Activated CD8-positive, alpha-beta memory T cell treated with anti-CD3 and anti-CD28 coated beads, Interleukin-2, amount 10 ng/mL, durations not matched to agents 7 days and 5 days (primary cell): ENCODE measurements at regions of chr5 and their contacts with region 1.

Region 1: GRCh38 chr5:43019614-43020293 is 20.4 kb downstream of the ANXA2R start:
- DNase-seq: peak; percentile 94
- ATAC-seq: peak; percentile 76
- H3K4me3 Mint-ChIP-seq: peak overlapping the region; percentile 96
- H3K27ac Mint-ChIP-seq: peak overlapping the region; percentile 100
- H3K4me1 Mint-ChIP-seq: peaks cover 33% of the 10 kb centered on the region
- H3K27me3 Mint-ChIP-seq: no peaks in the 10 kb centered on the region

Region 2: GRCh38 chr5:42908509-42909488 is 111.0 kb before region 1 on chr5:
- CTCF ChIA-PET with region 1: interaction called, 12 read pairs
- DNase-seq: peak; percentile 94
- ATAC-seq: peak; percentile 95
- H3K4me3 Mint-ChIP-seq: peak overlapping the region; percentile 90
- H3K27ac Mint-ChIP-seq: peak overlapping the region; percentile 79
- H3K4me1 Mint-ChIP-seq: peaks cover 17% of the 10 kb centered on the region
- H3K27me3 Mint-ChIP-seq: peaks cover 30% of the 10 kb centered on the region

Region 3: GRCh38 chr5:42994246-42995151 is 25.3 kb before region 1 on chr5:
- CTCF ChIA-PET with region 1: interaction called, 122 read pairs
- DNase-seq: peak; percentile 94
- ATAC-seq: peak; percentile 61
- H3K4me3 Mint-ChIP-seq: peak overlapping the region; percentile 94
- H3K27ac Mint-ChIP-seq: peak overlapping the region; percentile 100
- H3K4me1 Mint-ChIP-seq: peaks cover 16% of the 10 kb centered on the region
- H3K27me3 Mint-ChIP-seq: no peaks in the 10 kb centered on the region

Region 4: DNA sequence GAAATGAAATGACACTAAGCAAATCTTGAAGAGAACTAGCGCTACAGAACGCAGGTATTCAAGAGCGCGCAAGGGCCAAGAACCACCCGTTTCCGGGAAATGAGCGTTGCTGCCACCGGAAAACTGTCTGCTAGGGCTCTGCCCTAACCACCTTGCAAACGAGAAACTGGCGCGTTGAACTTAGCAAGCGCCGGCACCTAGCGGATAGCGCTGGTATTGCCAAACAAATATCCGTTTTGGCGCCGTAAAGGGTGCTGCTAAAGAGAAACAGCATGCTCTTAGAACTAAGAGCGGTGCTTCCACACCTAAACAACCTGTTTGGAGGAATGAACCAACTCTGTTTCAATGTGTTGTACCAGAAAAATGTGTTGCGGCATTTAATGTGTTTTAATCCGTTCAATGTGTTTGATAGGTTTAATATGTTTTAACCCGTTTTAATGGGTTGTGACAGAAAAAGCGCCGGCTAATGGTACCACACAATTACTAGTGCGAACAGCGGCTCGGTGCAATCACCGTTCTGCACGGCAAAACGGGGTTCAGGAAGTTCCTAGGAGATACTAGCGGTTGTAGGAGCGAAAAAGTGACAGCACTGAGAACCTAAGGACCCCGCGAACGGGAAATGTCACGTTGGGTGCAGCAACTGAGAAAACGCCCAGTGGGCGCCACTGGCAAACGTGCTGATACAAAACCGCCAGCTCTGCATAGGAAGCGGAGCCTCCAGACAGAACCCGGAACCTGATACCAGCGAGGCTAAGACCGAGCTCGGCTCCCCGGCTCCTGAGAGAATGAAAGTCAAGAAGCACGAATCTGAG is 20.7 kb after region 1 on chr5 and contains the start of gene ANXA2R:
- CTCF ChIA-PET with region 1: interaction called, 165 read pairs
- DNase-seq: peak; percentile 98
- ATAC-seq: peak; percentile 55
- H3K4me3 Mint-ChIP-seq: peak within 1 kb of the TSS; percentile 94
- H3K27ac Mint-ChIP-seq: peak within 1 kb of the TSS; percentile 100
- H3K4me1 Mint-ChIP-seq: peaks cover 43% of the 10 kb centered on the region
- H3K27me3 Mint-ChIP-seq: no peaks in the 10 kb centered on the region
- total RNA-seq, gene ANXA2R: 14.5 to 32.0 TPM

Region 5: DNA sequence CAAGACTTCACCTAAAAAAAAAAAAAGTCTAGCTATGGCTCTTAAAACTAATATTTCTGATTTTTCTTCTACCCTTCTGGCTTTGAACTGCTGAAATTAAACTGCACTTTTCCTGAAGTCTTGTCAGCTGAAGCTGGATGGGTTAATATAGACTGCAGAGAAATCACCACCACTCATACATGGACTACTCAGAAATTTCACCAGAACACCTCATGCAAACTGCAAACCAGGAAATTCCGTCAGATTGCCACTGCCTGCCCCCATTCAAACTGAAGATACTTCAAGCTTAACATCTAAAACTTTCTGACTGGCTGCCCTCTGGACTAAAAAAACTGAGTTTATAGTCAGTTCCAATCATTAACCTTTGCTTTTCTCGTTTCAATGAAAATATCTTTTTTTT is 31.9 kb after region 1 on chr5:
- CTCF ChIA-PET with region 1: no interaction called
- DNase-seq: no peak
- ATAC-seq: no peak
- H3K4me3 Mint-ChIP-seq: no peak overlapping the region
- H3K27ac Mint-ChIP-seq: no peak overlapping the region
- H3K4me1 Mint-ChIP-seq: peaks cover 14% of the 10 kb centered on the region
- H3K27me3 Mint-ChIP-seq: no peaks in the 10 kb centered on the region

Region 6: DNA sequence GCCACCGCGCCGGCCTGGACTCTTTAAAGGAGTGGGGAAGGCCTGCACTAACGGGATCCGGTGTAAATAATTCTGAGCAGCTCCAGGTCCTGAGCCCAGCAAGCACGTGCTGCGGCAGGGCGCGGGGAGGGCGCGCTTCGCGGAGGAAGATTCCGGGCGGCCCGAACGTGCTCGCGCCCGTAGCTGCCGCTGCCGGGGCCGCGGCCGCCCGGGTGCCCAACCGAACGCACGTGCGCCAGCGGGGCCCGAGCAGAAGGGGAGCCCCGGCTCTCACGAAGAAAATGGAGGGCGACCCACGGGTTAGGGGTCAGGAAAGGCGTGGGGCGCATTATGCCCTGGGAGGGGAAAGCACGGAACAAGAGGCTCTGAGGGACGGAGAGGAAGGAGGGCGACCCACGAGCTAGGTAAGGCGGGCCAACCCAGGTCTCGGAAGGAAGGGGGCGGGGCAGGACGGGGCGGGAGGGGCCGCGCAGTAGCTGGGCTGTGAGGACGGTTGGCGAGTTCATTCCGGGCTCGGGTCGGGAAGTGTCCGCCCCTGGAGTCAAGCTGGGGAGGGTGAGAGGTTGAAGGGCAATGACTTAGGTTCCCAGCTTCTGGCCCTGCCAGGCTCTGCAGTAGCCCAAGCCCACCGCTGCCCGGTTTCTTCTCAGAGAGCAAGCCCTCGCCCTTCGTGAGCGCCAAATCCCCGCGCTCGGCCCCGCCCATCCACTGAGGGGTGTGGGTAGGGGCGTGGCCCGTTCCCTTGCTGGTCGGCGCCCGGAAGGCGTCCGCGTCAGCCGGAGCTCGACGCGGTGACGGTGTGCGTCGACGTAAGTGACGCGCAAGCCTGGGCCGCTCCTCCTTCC is 101.2 kb after region 1 on chr5 and contains the start of gene ZNF131:
- CTCF ChIA-PET with region 1: interaction called, 10 read pairs
- DNase-seq: peak; percentile 97
- ATAC-seq: peak; percentile 88
- H3K4me3 Mint-ChIP-seq: peak within 1 kb of the TSS; percentile 87
- H3K27ac Mint-ChIP-seq: peak within 1 kb of the TSS; percentile 93
- H3K4me1 Mint-ChIP-seq: peaks cover 38% of the 10 kb centered on the region
- H3K27me3 Mint-ChIP-seq: no peaks in the 10 kb centered on the region
- total RNA-seq, gene ZNF131: 39.9 to 56.2 TPM